ENCODE measurements at regions of chr12 and their contacts with region 1.

Region 1: DNA sequence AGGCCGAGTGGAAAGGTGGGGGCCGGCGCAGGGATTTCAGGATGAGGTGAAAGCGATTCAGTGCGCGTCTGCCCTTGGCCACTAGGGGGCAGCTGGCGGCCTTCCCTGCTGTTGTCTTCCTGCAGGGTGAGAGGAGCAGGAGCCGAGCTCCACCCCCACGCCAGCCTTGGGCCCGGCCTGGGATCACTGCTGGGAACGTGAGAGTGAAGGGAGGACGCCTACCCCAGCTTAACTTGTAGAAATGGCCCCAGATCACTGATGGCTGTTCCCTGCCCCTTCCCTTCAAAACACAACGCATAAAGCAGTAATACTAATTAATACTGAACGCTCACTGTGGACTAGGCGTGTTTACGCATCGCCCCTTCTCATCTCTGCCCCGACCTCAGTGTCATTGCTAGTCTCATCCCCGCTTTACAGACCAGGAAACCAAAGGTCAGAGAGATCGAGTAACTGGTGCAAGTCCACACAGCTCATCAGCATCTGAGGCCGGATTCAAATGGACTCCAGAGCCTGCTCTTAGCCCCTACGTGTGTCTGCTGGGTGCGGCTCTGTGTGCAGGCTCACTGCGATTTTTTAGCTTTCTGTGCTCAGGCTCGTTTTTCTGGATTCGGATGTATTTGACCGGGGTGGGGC is 24.3 kb downstream of the MVK start:
- DNase-seq: peak; percentile 62
- H3K4me3 Mint-ChIP-seq: no peak overlapping the region
- H3K27ac Mint-ChIP-seq: no peak overlapping the region
- H3K4me1 Mint-ChIP-seq: peaks cover 24% of the 10 kb centered on the region
- H3K27me3 Mint-ChIP-seq: no peaks in the 10 kb centered on the region

Region 2: DNA sequence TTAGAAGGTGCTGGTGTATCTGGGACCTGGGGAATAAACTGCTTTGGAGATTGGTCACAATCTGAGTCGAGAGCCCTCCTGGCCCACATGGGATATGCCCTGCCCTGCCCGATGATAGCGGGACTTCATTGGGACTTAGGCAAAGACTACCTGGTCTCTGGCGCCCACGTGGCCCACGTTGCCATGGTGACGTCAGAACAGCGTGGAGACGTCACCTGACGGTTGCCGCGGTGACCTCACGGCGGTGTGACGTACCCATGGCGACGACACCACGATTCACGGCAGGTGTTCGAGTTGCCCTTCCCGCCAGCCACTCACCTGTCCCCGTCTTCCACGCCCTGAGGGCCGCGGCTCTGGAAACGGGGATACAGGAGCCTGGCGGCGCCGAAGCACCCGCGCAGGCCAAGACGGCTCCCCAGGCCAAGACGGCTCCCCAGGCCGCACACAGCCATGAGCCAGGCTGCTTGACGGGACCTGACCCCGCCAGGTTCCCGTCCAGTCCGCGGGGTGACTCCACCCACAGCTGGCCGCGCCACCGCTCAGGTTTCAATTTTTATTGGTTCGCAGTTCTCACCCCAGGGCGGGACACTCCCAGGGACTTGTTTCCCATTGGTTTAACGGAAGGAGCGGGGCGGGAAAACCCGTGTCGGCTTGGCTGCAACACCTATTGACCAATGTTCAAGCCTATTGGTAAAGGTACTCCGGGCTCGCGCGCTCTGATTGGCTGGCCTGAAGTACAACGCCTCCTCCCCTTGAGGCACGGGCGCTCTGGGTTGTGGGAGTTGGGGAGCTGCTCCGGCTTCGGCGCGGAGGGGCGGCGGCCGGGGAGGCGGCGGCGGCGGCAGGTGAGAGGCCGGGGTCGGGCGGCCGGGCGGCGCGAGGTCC is 24.6 kb before region 1 on chr12 and contains the starts of genes MMAB and MVK:
- CTCF ChIA-PET with region 1: interaction called, 12 read pairs
- POLR2A ChIA-PET with region 1: interaction called, 3 read pairs
- DNase-seq: peak; percentile 99
- H3K4me3 Mint-ChIP-seq: peak within 1 kb of the TSS; percentile 89
- H3K27ac Mint-ChIP-seq: peak within 1 kb of the TSS; percentile 83
- H3K4me1 Mint-ChIP-seq: peaks cover 33% of the 10 kb centered on the region
- H3K27me3 Mint-ChIP-seq: no peaks in the 10 kb centered on the region
- total RNA-seq, gene MMAB: 36.0 to 38.0 TPM
- total RNA-seq, gene MVK: 22.1 to 26.3 TPM

Region 3: DNA sequence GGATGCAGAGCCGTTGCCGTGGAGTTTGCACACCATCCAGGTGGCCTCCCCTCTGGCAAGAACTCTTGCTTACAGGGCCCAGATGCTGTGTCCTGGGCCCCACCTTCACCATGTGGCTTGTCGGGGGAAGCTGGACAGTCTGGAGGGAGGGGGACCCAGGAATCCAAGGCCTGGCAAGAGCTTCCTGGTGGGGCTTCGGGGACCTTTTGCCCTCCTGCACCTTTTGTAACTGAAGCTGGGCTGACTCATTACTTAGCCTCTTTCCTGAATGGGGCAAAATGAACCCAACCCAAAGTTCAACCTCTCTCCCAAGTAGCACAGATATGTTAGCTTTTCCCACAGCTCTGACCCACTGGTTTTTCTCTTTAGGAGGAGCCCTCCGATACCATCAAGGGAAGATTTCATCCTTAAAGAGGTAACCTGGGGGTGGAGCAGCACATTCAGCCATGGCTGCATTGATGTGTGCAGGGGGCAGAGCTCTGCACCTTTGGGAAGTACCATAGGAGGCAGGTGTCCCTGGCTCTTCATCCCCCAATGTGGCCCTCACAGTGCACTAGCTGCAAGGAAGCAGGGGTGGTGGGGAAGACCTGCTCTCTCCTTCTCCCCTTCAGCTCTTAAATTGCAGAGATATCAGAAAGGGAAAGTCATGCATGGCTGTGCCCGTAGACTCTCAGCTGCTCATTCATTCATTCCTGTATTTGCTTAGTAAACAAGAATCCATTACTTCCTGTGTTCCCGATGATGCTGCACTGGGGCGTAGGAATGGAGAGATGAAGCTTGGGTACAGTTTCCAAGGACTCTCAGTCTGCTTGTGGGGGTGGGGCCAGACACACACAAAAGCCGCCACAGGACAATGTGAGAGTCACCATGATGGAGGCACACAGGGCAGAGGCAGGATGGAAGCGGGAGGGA is 11.3 kb before region 1 on chr12:
- CTCF ChIA-PET with region 1: interaction called, 12 read pairs
- POLR2A ChIA-PET with region 1: no interaction called
- DNase-seq: no peak
- H3K4me3 Mint-ChIP-seq: no peak overlapping the region
- H3K27ac Mint-ChIP-seq: no peak overlapping the region
- H3K4me1 Mint-ChIP-seq: no peaks in the 10 kb centered on the region
- H3K27me3 Mint-ChIP-seq: no peaks in the 10 kb centered on the region

Region 4: GRCh38 chr12:109713187-109713984 is 115.5 kb after region 1 on chr12 and contains the start of gene FAM222A:
- CTCF ChIA-PET with region 1: interaction called, 12 read pairs
- POLR2A ChIA-PET with region 1: no interaction called
- DNase-seq: peak; percentile 95
- H3K4me3 Mint-ChIP-seq: peak within 1 kb of the TSS; percentile 64
- H3K27ac Mint-ChIP-seq: no peak within 1 kb of the TSS
- H3K4me1 Mint-ChIP-seq: peaks cover 9% of the 10 kb centered on the region
- H3K27me3 Mint-ChIP-seq: peaks cover 46% of the 10 kb centered on the region
- total RNA-seq, gene FAM222A: 0.28 to 0.43 TPM

Region 5: DNA sequence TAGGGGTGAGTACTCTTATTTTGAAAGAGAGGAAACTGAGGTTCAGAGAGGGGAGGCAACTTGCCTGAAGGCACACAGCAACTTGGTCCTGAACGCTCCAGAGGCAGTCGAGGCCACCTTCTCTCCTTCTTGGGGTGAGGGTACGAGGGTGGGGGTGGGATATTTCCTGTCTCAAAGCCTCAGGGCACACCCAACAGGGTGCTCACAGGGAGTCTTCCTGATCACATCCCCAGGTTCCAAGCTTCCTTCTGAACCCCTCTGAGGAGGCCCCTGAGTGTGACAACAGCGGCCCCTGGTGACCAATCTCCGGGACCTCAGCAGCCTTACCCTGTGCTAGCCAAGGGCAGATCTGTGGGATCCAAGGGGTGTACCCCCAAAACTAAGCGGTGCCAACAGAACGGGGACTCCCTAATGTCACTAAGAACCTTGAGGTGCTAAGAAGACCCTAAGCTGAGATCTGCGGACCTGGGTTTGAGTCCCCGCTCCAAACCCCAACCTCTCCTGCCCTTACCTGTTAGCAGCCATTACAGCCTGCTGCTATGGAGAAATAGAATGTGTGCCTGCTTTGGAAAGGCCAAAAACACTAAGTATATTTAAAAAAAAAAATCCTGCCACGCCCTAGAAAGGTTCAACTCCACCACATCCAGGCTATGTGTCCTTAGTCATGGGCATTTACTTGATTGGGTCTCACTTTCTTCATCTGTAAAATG is 177.4 kb after region 1 on chr12:
- CTCF ChIA-PET with region 1: interaction called, 26 read pairs
- POLR2A ChIA-PET with region 1: interaction called, 4 read pairs
- DNase-seq: peak; percentile 73
- H3K4me3 Mint-ChIP-seq: no peak overlapping the region
- H3K27ac Mint-ChIP-seq: no peak overlapping the region
- H3K4me1 Mint-ChIP-seq: peaks cover 6% of the 10 kb centered on the region
- H3K27me3 Mint-ChIP-seq: peaks cover 10% of the 10 kb centered on the region